Posterior vena cava (tissue), 2 donors: ENCODE measurements at regions of chr4 and their contacts with region 1.

Region 1: DNA sequence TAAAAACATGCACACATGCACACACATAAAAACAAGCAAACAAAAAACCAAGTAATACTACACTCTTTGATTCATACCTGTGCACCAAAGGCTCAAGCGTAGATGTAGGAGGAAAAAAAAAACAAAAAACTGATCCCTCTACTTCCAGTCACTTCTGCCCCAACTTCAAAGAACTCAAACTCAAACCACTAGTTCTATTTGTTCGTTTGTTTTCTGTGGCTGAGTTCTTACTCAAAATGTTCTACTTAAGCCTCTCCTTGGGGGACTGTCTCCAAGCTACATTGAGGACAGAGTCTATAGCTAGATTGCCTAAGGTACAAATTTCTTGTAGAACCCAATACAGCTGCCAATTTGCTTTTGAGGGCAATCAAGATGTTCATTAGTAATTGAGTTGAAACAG is 171.0 kb upstream of the ATOH1 start:
- DNase-seq: no peak

Region 2: DNA sequence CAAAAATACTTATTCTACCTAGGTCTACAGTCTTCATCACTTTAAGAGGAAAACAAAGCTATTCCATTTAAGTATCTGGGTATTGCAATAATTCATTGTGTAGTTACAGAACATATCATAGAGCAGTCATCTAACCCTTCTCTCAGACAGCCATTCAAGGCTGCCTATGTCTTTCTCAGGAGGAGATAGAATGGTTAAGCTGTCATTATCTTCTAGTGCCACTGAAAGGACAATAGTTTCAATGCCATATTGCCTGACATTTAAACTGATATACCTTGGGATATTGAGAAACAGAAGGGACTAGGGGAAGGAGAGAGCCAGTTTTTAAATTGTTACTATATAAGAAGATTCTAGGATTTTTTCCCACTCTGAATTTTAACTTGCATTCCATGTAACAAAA is 826.8 kb before region 1 on chr4:
- intact Hi-C with region 1: loop called in 1 of 2 experiments (anchors 10 kb)
- DNase-seq: no peak

Region 3: DNA sequence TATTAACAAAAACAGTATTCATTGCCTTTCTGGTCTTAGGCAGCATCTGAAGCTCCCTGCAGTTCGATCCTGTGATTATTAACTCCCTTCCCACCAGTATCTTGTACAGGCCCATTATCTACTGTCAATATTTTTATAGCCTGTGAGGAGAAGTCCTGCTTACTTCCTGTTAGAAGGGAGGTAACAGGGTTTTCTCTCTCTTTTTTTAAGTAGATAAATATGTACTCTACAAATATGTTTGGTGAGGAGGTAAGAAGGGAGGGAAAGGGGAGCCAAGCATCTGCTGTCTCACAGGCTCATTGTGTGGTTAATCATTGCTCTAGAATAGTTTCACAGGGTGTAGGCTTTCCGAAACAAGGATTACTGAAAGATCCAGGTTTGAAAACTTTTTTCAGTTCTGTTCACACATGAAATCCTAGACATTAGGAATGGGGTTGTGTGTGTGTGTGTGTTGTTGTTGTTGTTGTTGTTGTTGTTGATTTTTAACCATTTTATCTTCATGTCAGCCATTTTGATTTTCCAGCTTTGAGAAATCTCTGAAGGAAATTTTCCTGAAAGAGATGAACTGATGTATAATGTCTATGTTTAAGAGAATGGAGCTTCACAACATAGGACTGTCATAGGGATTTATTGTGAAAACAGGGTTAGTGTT is 185.2 kb after region 1 on chr4:
- intact Hi-C with region 1: no loop called
- DNase-seq: no peak

Region 4: GRCh38 chr4:94965852-94966251 is 1308.3 kb after region 1 on chr4:
- intact Hi-C with region 1: no loop called
- DNase-seq: no peak